WTC11 (cell line): ENCODE measurements at regions of chr20 and their contacts with region 1.

Region 1: GRCh38 chr20:35741892-35742740 is at the start of gene RBM39:
- DNase-seq: peak; percentile 99
- ATAC-seq: peak; percentile 94
- H3K4me3 Mint-ChIP-seq: peak within 1 kb of the TSS; percentile 98
- H3K27ac Mint-ChIP-seq: peak within 1 kb of the TSS; percentile 100
- H3K4me1 Mint-ChIP-seq: peaks cover 29% of the 10 kb centered on the region
- H3K27me3 Mint-ChIP-seq: no peaks in the 10 kb centered on the region
- CTCF ChIP-seq: no peak
- total RNA-seq, gene RBM39: 221 to 231 TPM (median 223 TPM) in 3 replicates

Region 2: DNA sequence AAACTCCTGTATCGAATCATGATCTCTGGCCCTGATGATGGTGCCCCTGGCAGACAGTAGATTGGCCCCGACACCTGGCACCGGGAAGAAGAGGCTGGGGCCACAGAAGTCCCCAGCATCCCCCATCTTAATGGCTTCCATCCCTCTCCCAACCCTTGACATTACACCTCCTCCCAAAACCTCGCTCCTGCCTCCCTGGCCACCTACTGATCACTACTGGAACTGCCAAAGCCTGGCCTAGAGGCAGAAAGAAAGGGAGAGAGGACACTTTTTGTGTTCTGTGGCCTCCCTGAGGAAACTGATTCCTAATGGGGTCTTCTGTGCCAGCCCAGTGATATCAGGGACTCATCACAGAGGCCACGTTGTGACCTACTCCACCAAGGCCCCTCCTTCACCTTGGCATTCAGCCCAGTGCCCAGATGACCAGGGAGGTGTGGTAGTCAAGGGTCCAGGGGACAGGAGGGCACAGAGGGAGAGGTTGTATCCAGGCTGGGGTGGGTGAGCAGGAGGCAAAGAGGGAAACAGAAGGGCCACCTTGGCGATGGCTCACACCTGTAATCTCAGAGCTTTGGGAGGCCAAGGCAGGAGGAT is 218.7 kb before region 1 on chr20:
- CTCF ChIA-PET with region 1: no interaction called
- POLR2A ChIA-PET with region 1: no interaction called
- DNase-seq: peak; percentile 69
- ATAC-seq: peak; percentile 97
- H3K4me3 Mint-ChIP-seq: no peak overlapping the region
- H3K27ac Mint-ChIP-seq: no peak overlapping the region
- H3K4me1 Mint-ChIP-seq: no peaks in the 10 kb centered on the region
- H3K27me3 Mint-ChIP-seq: no peaks in the 10 kb centered on the region; the same call in 1 of the 2 replicates
- CTCF ChIP-seq: peak; percentile 40

Region 3: DNA sequence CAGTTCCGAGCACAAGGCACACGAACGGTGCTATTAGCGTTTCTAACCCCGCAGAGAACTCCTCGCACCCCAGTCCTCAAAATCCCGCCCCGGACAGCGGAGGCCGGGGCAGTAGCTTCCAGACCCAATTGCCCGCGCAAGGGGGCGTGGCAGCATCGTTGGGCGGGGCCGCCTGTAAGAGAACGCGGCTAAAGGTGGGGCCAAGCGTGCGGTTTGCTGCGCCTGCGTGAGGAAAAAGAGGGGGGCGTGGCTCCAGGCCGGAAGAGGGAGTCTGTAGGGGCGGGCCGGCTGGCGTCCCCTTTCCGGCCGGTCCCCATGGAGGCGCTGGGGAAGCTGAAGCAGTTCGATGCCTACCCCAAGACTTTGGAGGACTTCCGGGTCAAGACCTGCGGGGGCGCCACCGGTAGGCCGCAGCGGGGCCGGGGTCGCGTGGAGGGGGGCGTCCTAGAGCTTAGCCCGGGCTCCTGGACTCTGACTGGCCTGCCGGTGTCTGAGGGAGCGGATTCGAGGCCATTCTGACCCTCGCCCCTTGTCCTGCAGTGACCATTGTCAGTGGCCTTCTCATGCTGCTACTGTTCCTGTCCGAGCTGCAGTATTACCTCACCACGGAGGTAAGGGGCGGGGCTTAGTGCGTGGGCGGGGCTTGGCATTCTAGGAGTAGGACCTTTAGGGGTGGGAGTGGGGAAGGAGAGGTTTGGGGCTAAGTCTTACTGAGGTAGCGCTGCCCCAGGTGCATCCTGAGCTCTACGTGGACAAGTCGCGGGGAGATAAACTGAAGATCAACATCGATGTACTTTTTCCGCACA is 200.1 kb before region 1 on chr20 and contains the start of gene ERGIC3:
- CTCF ChIA-PET with region 1: interaction called, 5 read pairs
- POLR2A ChIA-PET with region 1: interaction called, 15 read pairs
- DNase-seq: peak; percentile 100
- ATAC-seq: peak; percentile 85
- H3K4me3 Mint-ChIP-seq: peak within 1 kb of the TSS; percentile 83
- H3K27ac Mint-ChIP-seq: peak within 1 kb of the TSS; percentile 88
- H3K4me1 Mint-ChIP-seq: peaks cover 16% of the 10 kb centered on the region
- H3K27me3 Mint-ChIP-seq: no peaks in the 10 kb centered on the region; the same call in 1 of the 2 replicates
- CTCF ChIP-seq: no peak
- total RNA-seq, gene ERGIC3: 168 to 181 TPM (median 179 TPM) in 3 replicates

Region 4: GRCh38 chr20:35629427-35630145 is 112.5 kb before region 1 on chr20:
- CTCF ChIA-PET with region 1: no interaction called
- POLR2A ChIA-PET with region 1: no interaction called
- DNase-seq: no peak
- ATAC-seq: no peak
- H3K4me3 Mint-ChIP-seq: no peak overlapping the region
- H3K27ac Mint-ChIP-seq: no peak overlapping the region
- H3K4me1 Mint-ChIP-seq: no peaks in the 10 kb centered on the region
- H3K27me3 Mint-ChIP-seq: no peaks in the 10 kb centered on the region
- CTCF ChIP-seq: no peak

Region 5: DNA sequence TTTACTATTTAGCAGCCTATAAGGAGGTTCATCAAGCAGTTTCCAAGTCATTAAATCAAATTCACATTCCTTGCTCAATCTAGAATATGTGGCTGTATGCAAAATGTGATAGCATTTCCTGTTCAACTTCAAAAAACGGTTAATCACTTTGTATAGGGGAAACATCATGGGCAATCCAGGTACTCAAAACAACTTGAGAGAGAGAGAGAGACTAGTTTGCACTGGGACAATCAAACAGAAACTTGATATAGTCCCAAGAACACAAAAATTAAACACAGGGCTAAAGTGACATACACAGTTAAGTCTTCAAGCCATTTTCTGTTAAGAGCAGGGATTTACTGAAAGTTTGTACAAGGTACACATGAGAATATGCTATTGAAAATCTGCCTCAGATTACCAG is 84.8 kb before region 1 on chr20:
- CTCF ChIA-PET with region 1: no interaction called
- POLR2A ChIA-PET with region 1: no interaction called
- DNase-seq: no peak
- ATAC-seq: no peak
- H3K4me3 Mint-ChIP-seq: no peak overlapping the region
- H3K27ac Mint-ChIP-seq: peak overlapping the region; percentile 71; the same call in 1 of the 2 replicates
- H3K4me1 Mint-ChIP-seq: peaks cover 39% of the 10 kb centered on the region
- H3K27me3 Mint-ChIP-seq: no peaks in the 10 kb centered on the region
- CTCF ChIP-seq: no peak

Region 6: GRCh38 chr20:35718972-35719635 is 23.0 kb before region 1 on chr20:
- CTCF ChIA-PET with region 1: no interaction called
- POLR2A ChIA-PET with region 1: interaction called, 17 read pairs
- DNase-seq: no peak
- ATAC-seq: no peak
- H3K4me3 Mint-ChIP-seq: no peak overlapping the region
- H3K27ac Mint-ChIP-seq: no peak overlapping the region
- H3K4me1 Mint-ChIP-seq: 0 out of 2 replicates have a peak, but pooled peaks cover 4% of the 10 kb centered on the region
- H3K27me3 Mint-ChIP-seq: no peaks in the 10 kb centered on the region
- CTCF ChIP-seq: no peak

Region 7: DNA sequence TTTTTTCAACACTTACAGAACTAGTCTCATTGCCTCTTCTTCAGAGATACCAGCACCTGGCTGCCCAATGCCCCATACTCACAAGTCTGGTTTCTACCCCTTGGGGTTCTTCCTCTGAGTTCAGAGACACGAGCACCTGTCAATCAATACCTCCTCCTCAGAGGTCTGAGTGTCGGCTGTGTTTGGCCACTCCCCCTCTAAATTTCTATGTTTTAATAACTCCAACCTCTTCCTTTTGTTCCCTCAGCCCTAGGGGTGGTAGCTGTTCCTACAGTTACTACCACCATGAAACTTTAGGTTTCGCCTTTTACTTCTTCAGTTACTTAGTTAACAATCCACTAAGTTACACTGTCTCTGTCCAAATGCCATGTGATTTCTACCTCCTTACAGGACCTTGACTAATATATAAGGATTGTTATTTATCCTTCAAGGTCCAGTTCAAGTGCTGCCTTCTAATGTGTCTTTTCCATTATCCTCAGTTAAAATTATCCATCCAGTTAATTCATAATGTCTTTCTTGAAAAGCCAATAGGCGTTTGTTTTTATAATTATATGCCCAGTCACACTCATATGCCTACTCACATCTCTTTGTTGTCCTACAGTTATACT is 15.1 kb after region 1 on chr20:
- CTCF ChIA-PET with region 1: interaction called, 16 read pairs
- POLR2A ChIA-PET with region 1: interaction called, 4 read pairs
- DNase-seq: no peak
- ATAC-seq: no peak; the same call in 1 of the 2 replicates
- H3K4me3 Mint-ChIP-seq: no peak overlapping the region
- H3K27ac Mint-ChIP-seq: no peak overlapping the region
- H3K4me1 Mint-ChIP-seq: no peaks in the 10 kb centered on the region
- H3K27me3 Mint-ChIP-seq: no peaks in the 10 kb centered on the region
- CTCF ChIP-seq: no peak

Region 8: GRCh38 chr20:35849706-35850105 is 107.6 kb after region 1 on chr20:
- CTCF ChIA-PET with region 1: interaction called, 10 read pairs
- POLR2A ChIA-PET with region 1: interaction called, 18 read pairs
- DNase-seq: no peak
- ATAC-seq: no peak
- H3K4me3 Mint-ChIP-seq: no peak overlapping the region
- H3K27ac Mint-ChIP-seq: peak overlapping the region; percentile 44
- H3K4me1 Mint-ChIP-seq: no peaks in the 10 kb centered on the region
- H3K27me3 Mint-ChIP-seq: no peaks in the 10 kb centered on the region
- CTCF ChIP-seq: no peak

Region 9: DNA sequence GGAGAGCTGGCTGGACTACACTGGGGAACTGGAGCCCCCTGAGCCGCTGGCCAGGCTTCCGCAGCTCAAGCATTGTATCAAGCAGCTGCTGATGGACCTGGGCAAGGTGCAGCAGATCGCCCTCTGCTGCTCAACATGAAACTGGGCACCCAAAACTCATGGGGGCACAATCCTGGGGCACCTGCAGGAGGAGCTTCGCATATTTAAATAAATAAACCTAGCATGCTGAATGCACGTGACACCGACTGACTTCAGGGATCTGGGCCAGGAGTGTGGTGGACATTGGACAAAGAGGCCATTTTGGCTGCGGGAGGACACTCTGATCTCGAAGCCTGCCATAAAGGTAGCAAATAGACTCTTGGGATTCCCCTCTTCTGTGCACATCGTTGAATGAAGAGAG is 205.4 kb after region 1 on chr20:
- CTCF ChIA-PET with region 1: interaction called, 15 read pairs
- POLR2A ChIA-PET with region 1: interaction called, 3 read pairs
- DNase-seq: peak; percentile 67
- ATAC-seq: peak; percentile 96
- H3K4me3 Mint-ChIP-seq: no peak overlapping the region
- H3K27ac Mint-ChIP-seq: peak overlapping the region; percentile 89
- H3K4me1 Mint-ChIP-seq: peaks cover 5% of the 10 kb centered on the region
- H3K27me3 Mint-ChIP-seq: no peaks in the 10 kb centered on the region
- CTCF ChIP-seq: 0 out of 2 replicates have a peak, but pooled peaks have one; percentile 32